Natural killer cell (primary cell): ENCODE measurements at regions of chr7 and their contacts with region 1.

Region 1: DNA sequence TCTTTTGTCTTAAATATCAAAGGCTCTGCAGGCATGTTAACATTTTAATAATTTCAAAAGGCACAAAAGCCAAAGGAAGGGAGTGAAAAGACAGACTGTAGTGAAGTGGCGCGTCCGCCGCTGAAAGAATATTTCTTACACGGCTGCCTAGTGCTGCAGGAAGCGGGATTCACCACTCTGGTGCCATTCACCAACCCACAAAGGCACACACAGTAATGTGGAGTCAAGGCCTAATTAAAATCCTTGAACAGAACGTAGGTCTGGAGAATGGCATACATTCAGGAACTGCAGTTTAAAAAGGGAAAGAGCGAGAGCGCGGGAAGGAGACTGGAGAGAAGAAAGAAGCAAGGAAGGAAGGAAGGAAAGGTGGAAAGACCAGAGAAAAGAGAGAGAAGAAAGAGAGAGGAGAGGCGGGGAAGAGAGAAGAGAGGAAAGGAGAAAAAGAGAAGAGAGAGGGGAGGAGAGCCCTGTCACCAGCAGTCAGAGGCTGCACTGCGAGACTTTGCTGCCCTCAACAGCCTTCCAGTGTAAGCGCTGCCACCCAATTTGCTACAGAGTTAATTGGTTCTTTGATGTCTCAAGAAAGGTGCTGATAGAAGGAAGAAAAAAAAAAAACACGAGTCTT is 554.0 kb downstream of the MDFIC start:
- DNase-seq: peak in 1 of 2 donors; percentile 25
- ATAC-seq: peak; percentile 54 to 74 (median 64)
- H3K4me3 ChIP-seq: no peak overlapping the region
- H3K4me3 Mint-ChIP-seq: peak overlapping the region; percentile 49
- H3K27ac ChIP-seq: no peak overlapping the region
- H3K27ac Mint-ChIP-seq: no peak overlapping the region
- H3K4me1 ChIP-seq: peaks cover 14% of the 10 kb centered on the region
- H3K4me1 Mint-ChIP-seq: peaks cover 18 to 27% of the 10 kb centered on the region in 2 donors
- H3K27me3 ChIP-seq: peaks cover 23% of the 10 kb centered on the region
- H3K27me3 Mint-ChIP-seq: peaks cover 28 to 51% of the 10 kb centered on the region in 2 donors
- CTCF ChIP-seq: no peak

Region 2: DNA sequence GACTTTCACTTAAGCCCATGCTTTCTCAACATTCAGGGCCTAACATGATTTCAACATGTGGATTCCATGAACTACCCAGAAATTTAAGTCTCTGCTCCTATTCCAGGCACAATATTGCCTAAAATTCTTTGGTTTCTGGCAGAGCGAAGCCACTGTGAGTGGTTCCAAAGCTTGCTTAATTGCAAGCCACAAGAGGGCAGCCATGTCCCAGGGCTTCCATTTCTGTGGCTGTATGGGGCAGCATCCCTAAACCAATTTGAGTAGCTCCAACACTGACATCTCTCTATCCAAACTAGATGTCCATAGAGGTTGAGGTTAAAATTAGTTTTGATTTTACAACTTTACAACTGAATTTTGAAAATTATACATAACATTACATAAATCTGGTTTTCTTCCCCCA is 610.3 kb before region 1 on chr7:
- intact Hi-C with region 1: loop called (anchors 1 kb)
- DNase-seq: peak; percentile 16 to 77
- ATAC-seq: peak; percentile 52 to 62 (median 60)
- H3K4me3 ChIP-seq: no peak overlapping the region
- H3K4me3 Mint-ChIP-seq: no peak overlapping the region
- H3K27ac ChIP-seq: no peak overlapping the region
- H3K27ac Mint-ChIP-seq: no peak overlapping the region
- H3K4me1 ChIP-seq: no peaks in the 10 kb centered on the region
- H3K4me1 Mint-ChIP-seq: no peaks in the 10 kb centered on the region
- H3K27me3 ChIP-seq: no peaks in the 10 kb centered on the region
- H3K27me3 Mint-ChIP-seq: no peaks in the 10 kb centered on the region
- CTCF ChIP-seq: peak; percentile 30

Region 3: GRCh38 chr7:115356139-115356746 is 119.6 kb before region 1 on chr7:
- intact Hi-C with region 1: loop called (anchors 5 kb)
- DNase-seq: peak in 1 of 2 donors; percentile 8
- ATAC-seq: peak in 1 of 3 donors; percentile 49
- H3K4me3 ChIP-seq: no peak overlapping the region
- H3K4me3 Mint-ChIP-seq: no peak overlapping the region
- H3K27ac ChIP-seq: no peak overlapping the region
- H3K27ac Mint-ChIP-seq: peak overlapping the region in 1 of 2 donors; percentile 40
- H3K4me1 ChIP-seq: no peaks in the 10 kb centered on the region
- H3K4me1 Mint-ChIP-seq: peaks cover 16 to 17% of the 10 kb centered on the region in 2 donors
- H3K27me3 ChIP-seq: no peaks in the 10 kb centered on the region
- H3K27me3 Mint-ChIP-seq: peaks cover 0 to 9% of the 10 kb centered on the region in 2 donors
- CTCF ChIP-seq: peak; percentile 69